Heart right ventricle (tissue), 16 donors: ENCODE measurements at regions of chr6 and their contacts with region 1.

Region 1: GRCh38 chr6:71665931-71666330 is 220.4 kb upstream of the RIMS1 start:
- DNase-seq: no peak
- ATAC-seq: no peak
- H3K4me3 ChIP-seq: no peak overlapping the region
- H3K27ac ChIP-seq: no peak overlapping the region
- H3K4me1 ChIP-seq: no peaks in the 10 kb centered on the region
- H3K27me3 ChIP-seq: no peaks in the 10 kb centered on the region
- CTCF ChIP-seq: no peak

Region 2: DNA sequence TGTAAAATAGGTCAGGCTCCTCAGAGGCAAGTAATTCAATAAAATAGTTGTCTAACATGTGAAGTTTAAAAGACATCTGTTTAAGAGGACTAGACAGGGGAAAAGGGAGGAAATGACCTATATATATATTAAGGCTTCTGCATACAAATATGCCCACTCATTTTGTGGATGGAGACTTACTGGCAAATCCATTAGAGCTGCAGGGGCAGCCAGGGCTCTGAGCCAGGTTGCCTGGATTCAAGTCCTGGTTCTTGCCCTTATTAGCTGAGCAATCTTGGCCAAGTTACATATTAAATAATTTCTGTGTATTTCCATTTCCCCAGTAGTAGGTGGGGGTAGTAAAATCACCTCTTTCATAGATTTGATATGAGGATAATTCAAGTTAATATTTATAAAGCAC is 66.6 kb before region 1 on chr6:
- intact Hi-C with region 1: no loop called
- DNase-seq: no peak
- ATAC-seq: no peak
- H3K4me3 ChIP-seq: no peak overlapping the region
- H3K27ac ChIP-seq: no peak overlapping the region
- H3K4me1 ChIP-seq: peaks cover 0 to 10% (median 5%) of the 10 kb centered on the region in 9 donors
- H3K27me3 ChIP-seq: no peaks in the 10 kb centered on the region
- CTCF ChIP-seq: no peak

Region 3: DNA sequence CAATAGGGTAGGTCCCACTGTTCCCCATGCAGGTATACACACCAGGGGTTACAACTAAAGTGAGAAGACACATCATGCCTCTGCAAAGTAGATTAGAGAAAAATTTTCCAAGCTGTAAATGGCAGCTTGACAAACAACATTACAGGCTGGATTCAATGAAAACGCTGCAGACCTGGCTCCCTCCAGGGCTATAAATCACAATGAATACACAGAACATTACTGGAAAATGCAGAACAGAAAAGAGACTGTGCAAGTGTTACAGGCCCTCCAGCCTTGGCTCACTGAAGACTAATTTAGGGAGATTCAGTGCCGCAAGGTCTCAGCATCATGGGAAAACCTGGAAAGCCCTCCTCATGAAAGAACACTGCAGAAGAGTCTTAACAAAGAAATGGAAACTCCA is 1351.5 kb after region 1 on chr6:
- intact Hi-C with region 1: loop called in 1 of 10 experiments (anchors 5 kb)
- DNase-seq: no peak
- ATAC-seq: no peak
- H3K4me3 ChIP-seq: no peak overlapping the region
- H3K27ac ChIP-seq: no peak overlapping the region
- H3K4me1 ChIP-seq: no peaks in the 10 kb centered on the region
- H3K27me3 ChIP-seq: no peaks in the 10 kb centered on the region
- CTCF ChIP-seq: no peak